Thyroid gland (tissue), 4 donors: ENCODE measurements at regions of chr15 and their contacts with region 1.

Region 1: GRCh38 chr15:85330901-85331588 is 49.4 kb upstream of the AKAP13 start:
- DNase-seq: peak; percentile 98 to 99
- H3K4me3 ChIP-seq: no peak overlapping the region
- H3K27ac ChIP-seq: peak overlapping the region; percentile 96 to 98 (median 98)
- H3K4me1 ChIP-seq: peaks cover 28 to 60% of the 10 kb centered on the region in 2 donors
- H3K27me3 ChIP-seq: no peaks in the 10 kb centered on the region
- CTCF ChIP-seq: peak; percentile 60 to 99 (median 92)
- POLR2A ChIP-seq: peak in 1 of 2 donors; percentile 54

Region 2: GRCh38 chr15:85407804-85408746 is 77.0 kb after region 1 on chr15:
- intact Hi-C with region 1: loop called (anchors 10 kb)
- DNase-seq: peak in 1 of 2 donors; percentile 5
- H3K4me3 ChIP-seq: no peak overlapping the region
- H3K27ac ChIP-seq: peak overlapping the region; percentile 47 to 75 (median 66)
- H3K4me1 ChIP-seq: peaks cover 57 to 73% of the 10 kb centered on the region in 2 donors
- H3K27me3 ChIP-seq: no peaks in the 10 kb centered on the region
- CTCF ChIP-seq: no peak
- POLR2A ChIP-seq: no peak

Region 3: DNA sequence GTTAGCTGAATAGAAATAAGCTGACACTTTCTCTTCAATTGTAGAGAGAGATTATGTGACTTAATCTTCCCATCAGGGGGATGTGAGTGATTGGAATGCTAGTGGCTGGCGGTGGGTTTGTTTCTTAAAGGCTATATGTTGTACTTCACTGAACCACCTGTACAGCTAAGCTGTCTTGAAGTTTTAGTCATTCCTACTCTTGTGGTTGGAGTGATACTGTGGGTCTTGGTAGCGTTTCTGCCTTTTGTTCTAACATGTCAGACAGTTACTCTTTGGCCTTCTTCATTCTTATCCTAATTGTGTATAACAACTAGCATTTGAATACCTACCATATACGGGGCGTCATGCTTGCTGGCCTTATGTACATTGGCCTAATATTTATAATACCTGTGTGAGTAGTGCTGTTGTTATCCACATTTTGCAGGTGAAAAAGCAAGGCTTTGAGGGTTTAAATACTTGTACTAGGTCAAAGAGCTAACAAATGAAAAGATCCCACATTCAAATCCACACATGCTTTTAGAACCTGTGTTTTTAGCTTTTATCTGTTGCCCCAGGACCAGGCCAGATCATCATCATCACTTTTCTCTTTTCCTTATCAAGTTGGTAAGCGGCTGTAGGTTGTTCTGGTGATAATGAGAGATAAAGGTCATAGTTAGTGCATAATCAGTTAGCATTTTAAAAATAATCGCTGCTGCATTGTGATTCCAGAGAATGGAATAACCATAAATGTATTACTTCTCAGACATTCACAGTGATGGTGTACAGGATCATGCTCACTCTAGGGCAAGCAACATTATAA is 99.6 kb after region 1 on chr15:
- intact Hi-C with region 1: no loop called
- DNase-seq: no peak
- H3K4me3 ChIP-seq: no peak overlapping the region
- H3K27ac ChIP-seq: no peak overlapping the region
- H3K4me1 ChIP-seq: peaks cover 6 to 19% of the 10 kb centered on the region in 2 donors
- H3K27me3 ChIP-seq: no peaks in the 10 kb centered on the region
- CTCF ChIP-seq: no peak
- POLR2A ChIP-seq: no peak

Region 4: DNA sequence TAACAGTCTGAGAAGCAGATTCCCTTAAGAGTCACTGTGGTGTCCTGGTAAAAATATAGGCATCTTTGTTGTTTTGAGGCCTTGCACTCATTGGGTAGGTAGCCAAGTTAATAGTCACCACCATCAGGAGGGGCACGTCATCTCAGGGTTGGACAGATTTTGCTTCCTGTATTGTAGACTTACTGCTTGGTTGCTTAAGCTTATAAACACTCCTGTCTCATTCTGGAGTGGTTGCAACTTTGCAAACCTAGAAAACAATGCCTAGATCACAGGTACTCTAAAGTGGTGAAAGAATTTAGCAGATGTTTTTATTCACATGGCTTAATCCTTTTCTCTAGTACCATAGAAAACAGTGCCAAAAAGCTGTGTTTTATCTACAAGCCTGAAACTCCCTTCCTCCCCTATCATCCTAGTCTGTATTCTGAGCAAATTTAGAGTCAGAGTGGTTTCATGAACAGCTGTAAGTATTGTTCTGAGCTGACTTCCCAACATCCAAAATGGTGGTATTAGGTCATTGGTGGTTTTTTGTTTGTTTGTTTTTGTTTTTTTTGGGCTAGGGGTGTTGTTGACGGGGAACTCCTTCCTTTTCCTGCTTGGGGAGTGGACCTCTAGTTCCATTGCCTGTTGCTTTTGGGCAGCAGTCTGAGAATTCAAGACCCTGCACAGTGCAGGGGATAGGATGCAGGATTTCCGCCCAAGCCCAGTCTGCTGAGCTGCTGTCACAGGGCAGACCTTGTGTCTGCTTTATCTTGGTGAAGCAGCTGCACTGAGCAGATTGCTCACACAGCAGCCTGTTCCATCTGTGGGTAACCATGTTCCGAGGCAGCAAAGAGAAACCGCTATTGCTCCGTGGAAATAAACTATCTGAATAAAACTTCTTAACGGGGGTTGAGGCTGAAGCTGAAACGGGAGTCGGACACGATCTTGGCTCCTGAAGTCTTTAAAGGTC is 251.4 kb after region 1 on chr15:
- intact Hi-C with region 1: loop called (anchors 10 kb)
- DNase-seq: peak; percentile 51 to 62
- H3K4me3 ChIP-seq: peak overlapping the region in 1 of 3 donors; percentile 17
- H3K27ac ChIP-seq: peak overlapping the region; percentile 87 to 96 (median 96)
- H3K4me1 ChIP-seq: peaks cover 66 to 79% of the 10 kb centered on the region in 2 donors
- H3K27me3 ChIP-seq: no peaks in the 10 kb centered on the region
- CTCF ChIP-seq: no peak
- POLR2A ChIP-seq: peak in 1 of 2 donors; percentile 33